A673 (cell line): ENCODE measurements at regions of chr17 and their contacts with region 1.

Region 1: DNA sequence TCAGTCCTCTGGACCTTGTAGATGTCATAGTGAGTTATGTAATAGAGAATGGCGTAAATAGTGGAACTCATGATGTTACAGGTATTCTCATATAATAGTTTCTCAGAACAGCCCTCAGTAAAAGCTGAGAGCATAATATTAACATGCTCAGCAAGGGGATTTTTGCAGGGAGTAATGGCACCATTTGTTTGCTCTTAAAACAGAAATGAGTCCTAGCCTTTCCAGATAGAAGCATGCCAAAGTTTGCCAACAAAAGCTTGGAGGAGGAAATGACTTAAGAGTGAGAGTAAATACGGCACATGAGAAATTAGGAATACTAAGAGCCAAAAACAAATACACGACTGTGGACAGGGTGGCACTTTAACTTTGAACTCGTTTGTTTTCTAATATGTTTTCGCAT is 198.4 kb downstream of the ANKFN1 start:
- DNase-seq: no peak
- H3K4me3 ChIP-seq: no peak overlapping the region
- H3K27ac ChIP-seq: no peak overlapping the region
- H3K4me1 ChIP-seq: no peaks in the 10 kb centered on the region
- H3K27me3 ChIP-seq: no peaks in the 10 kb centered on the region
- CTCF ChIP-seq: no peak

Region 2: GRCh38 chr17:56064506-56064905 is 287.2 kb before region 1 on chr17:
- CTCF ChIA-PET with region 1: no interaction called
- POLR2A ChIA-PET with region 1: no interaction called
- intact Hi-C with region 1: no loop called
- DNase-seq: no peak
- H3K4me3 ChIP-seq: no peak overlapping the region
- H3K27ac ChIP-seq: no peak overlapping the region
- H3K4me1 ChIP-seq: no peaks in the 10 kb centered on the region
- H3K27me3 ChIP-seq: no peaks in the 10 kb centered on the region
- CTCF ChIP-seq: no peak

Region 3: DNA sequence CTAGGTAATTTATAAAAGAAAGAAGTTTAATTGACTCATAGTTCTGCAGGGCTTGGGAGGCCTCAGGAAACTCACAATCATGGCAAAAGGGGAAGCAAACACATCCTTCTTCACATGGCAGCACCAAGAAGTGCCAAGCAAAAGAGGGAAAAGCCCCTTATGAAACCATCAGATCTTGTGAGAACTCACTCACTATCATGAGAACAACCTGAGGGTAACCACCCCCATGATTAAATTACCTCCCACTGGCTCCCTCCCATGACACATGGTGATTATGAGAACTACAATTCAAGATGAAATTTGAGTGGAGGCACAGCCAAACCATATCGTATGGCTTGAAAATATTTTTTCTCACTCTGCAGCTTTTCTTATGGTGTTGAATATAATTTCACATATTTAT is 46.7 kb before region 1 on chr17:
- CTCF ChIA-PET with region 1: no interaction called
- POLR2A ChIA-PET with region 1: no interaction called
- intact Hi-C with region 1: no loop called
- DNase-seq: no peak
- H3K4me3 ChIP-seq: no peak overlapping the region
- H3K27ac ChIP-seq: no peak overlapping the region
- H3K4me1 ChIP-seq: no peaks in the 10 kb centered on the region
- H3K27me3 ChIP-seq: peaks cover 16% of the 10 kb centered on the region
- CTCF ChIP-seq: no peak

Region 4: GRCh38 chr17:56389356-56389755 is 37.7 kb after region 1 on chr17:
- CTCF ChIA-PET with region 1: no interaction called
- POLR2A ChIA-PET with region 1: interaction called, 16 read pairs
- intact Hi-C with region 1: no loop called
- DNase-seq: no peak
- H3K4me3 ChIP-seq: no peak overlapping the region
- H3K27ac ChIP-seq: no peak overlapping the region
- H3K4me1 ChIP-seq: no peaks in the 10 kb centered on the region
- H3K27me3 ChIP-seq: no peaks in the 10 kb centered on the region
- CTCF ChIP-seq: no peak